WTC11 (cell line): ENCODE measurements at regions of chr9 and their contacts with region 1.

Region 1: DNA sequence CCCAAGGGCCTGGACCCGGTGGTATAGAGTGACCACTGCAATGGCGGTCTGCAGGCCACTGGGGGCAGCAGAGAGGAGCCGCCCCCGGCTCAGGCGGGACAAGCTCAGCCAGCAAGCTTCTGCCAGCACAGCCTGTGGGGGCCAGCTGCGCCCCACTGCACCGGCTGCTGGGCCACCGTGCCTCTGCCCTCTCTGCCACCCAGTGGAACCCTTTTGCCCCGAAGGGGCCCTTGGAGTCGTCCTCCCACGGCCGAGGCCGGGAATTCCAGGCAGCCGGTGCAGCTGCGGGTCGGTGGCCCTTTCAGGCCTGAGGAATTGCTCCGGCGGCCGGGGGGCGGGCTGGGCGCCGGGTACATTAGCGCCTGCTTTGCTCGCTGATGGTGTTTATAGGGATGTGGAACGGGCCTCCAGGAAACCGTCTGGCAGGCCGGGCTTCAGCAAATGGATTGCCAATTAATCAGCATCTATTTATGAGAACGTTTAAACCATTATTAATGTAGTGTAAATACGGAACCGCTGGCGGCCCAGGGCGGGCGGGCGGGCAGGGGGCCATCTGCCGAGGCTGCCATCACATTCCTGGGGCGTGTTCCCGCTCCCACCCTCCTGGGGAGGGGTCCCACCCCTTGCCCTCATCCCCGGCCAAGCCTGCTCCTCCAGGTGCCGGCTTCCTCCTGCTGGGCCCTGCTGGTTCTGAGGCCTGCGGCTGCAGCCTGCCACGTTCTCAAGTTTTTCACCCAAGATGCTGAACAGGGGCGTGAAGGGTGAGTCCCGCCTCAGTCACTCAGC is 127.4 kb downstream of the BARX1 start:
- DNase-seq: peak; percentile 81
- ATAC-seq: peak; percentile 91
- H3K4me3 Mint-ChIP-seq: peak overlapping the region; percentile 30
- H3K27ac Mint-ChIP-seq: no peak overlapping the region
- H3K4me1 Mint-ChIP-seq: peaks cover 13% of the 10 kb centered on the region
- H3K27me3 Mint-ChIP-seq: peaks cover 7% of the 10 kb centered on the region
- CTCF ChIP-seq: peak; percentile 87

Region 2: GRCh38 chr9:93668261-93668871 is 159.4 kb before region 1 on chr9:
- CTCF ChIA-PET with region 1: interaction called, 10 read pairs
- POLR2A ChIA-PET with region 1: no interaction called
- DNase-seq: peak; percentile 14
- ATAC-seq: peak; percentile 30
- H3K4me3 Mint-ChIP-seq: no peak overlapping the region
- H3K27ac Mint-ChIP-seq: peak overlapping the region; percentile 63; the same call in 1 of the 2 replicates
- H3K4me1 Mint-ChIP-seq: no peaks in the 10 kb centered on the region
- H3K27me3 Mint-ChIP-seq: no peaks in the 10 kb centered on the region
- CTCF ChIP-seq: no peak

Region 3: GRCh38 chr9:93759307-93759706 is 68.4 kb before region 1 on chr9:
- CTCF ChIA-PET with region 1: no interaction called
- POLR2A ChIA-PET with region 1: no interaction called
- DNase-seq: no peak
- ATAC-seq: no peak
- H3K4me3 Mint-ChIP-seq: no peak overlapping the region
- H3K27ac Mint-ChIP-seq: no peak overlapping the region
- H3K4me1 Mint-ChIP-seq: peaks cover 24% of the 10 kb centered on the region
- H3K27me3 Mint-ChIP-seq: peaks cover 11% of the 10 kb centered on the region
- CTCF ChIP-seq: no peak

Region 4: DNA sequence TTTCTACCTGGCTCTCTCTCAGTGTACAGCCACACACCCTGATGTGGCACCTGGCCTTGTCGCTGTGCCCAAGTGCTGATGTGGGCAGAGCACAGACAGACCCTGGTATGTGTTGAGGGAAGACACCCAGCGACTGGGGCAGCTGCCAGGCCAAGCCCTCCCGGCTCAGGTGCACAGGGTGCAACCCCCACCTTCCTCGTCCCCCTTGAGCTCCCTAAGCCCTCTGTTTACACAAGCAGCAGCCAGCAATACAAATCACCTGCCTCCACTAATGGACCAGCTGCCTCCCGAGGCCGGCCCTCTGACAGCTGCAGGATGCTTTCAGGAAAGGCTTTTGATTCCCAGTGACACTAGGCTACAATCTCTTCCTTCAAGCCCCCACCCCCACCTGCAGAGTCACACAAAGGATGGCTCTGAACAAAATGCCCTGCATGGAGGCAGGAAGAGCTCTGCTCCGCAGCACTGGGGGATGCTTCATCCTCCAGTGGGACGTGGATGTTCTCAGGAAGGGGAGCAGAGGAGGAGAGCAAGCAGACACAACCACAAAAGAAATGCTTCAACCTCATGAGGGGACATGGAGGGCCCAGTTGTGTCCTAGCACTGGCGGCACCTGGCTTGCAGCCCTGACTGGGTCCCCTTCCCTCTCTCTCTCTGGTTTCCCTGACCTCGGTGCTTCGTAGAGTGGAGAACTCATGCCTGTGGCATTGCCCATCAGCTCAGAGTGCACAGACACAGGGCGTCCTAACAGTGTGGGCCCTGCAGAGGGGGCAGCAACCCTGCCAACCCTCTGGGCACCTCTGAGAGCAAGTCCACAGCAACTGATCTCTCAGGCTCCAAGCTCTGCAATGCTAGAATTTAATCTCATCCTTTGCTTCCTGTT is 13.4 kb before region 1 on chr9:
- CTCF ChIA-PET with region 1: interaction called, 68 read pairs
- POLR2A ChIA-PET with region 1: no interaction called
- DNase-seq: no peak
- ATAC-seq: peak; percentile 59
- H3K4me3 Mint-ChIP-seq: no peak overlapping the region
- H3K27ac Mint-ChIP-seq: no peak overlapping the region
- H3K4me1 Mint-ChIP-seq: peaks cover 37% of the 10 kb centered on the region
- H3K27me3 Mint-ChIP-seq: no peaks in the 10 kb centered on the region
- CTCF ChIP-seq: no peak

Region 5: GRCh38 chr9:93860694-93861658 is 33.2 kb after region 1 on chr9:
- CTCF ChIA-PET with region 1: interaction called, 52 read pairs
- POLR2A ChIA-PET with region 1: no interaction called
- DNase-seq: peak; percentile 40
- ATAC-seq: peak; percentile 12; the same call in 1 of the 2 replicates
- H3K4me3 Mint-ChIP-seq: peak overlapping the region; percentile 34; the same call in 1 of the 2 replicates
- H3K27ac Mint-ChIP-seq: no peak overlapping the region
- H3K4me1 Mint-ChIP-seq: peaks cover 27% of the 10 kb centered on the region
- H3K27me3 Mint-ChIP-seq: no peaks in the 10 kb centered on the region; the same call in 1 of the 2 replicates
- CTCF ChIP-seq: no peak

Region 6: GRCh38 chr9:93930070-93930469 is 102.3 kb after region 1 on chr9:
- CTCF ChIA-PET with region 1: interaction called, 10 read pairs
- POLR2A ChIA-PET with region 1: no interaction called
- DNase-seq: no peak
- ATAC-seq: peak; percentile 74
- H3K4me3 Mint-ChIP-seq: no peak overlapping the region
- H3K27ac Mint-ChIP-seq: no peak overlapping the region
- H3K4me1 Mint-ChIP-seq: 0 out of 2 replicates have a peak, but pooled peaks cover 4% of the 10 kb centered on the region
- H3K27me3 Mint-ChIP-seq: peaks cover 8% of the 10 kb centered on the region; the same call in 1 of the 2 replicates
- CTCF ChIP-seq: no peak

Region 7: GRCh38 chr9:93950619-93951601 is 123.2 kb after region 1 on chr9:
- CTCF ChIA-PET with region 1: interaction called, 157 read pairs
- POLR2A ChIA-PET with region 1: no interaction called
- DNase-seq: peak; percentile 62
- ATAC-seq: peak; percentile 2; the same call in 1 of the 2 replicates
- H3K4me3 Mint-ChIP-seq: peak overlapping the region; percentile 69
- H3K27ac Mint-ChIP-seq: no peak overlapping the region
- H3K4me1 Mint-ChIP-seq: peaks cover 67% of the 10 kb centered on the region
- H3K27me3 Mint-ChIP-seq: peaks cover 93% of the 10 kb centered on the region
- CTCF ChIP-seq: no peak

Region 8: GRCh38 chr9:94213511-94214124 is 385.9 kb after region 1 on chr9:
- CTCF ChIA-PET with region 1: interaction called, 10 read pairs
- POLR2A ChIA-PET with region 1: no interaction called
- DNase-seq: peak; percentile 81
- ATAC-seq: peak; percentile 88
- H3K4me3 Mint-ChIP-seq: no peak overlapping the region
- H3K27ac Mint-ChIP-seq: no peak overlapping the region
- H3K4me1 Mint-ChIP-seq: peaks cover 20% of the 10 kb centered on the region
- H3K27me3 Mint-ChIP-seq: peaks cover 11% of the 10 kb centered on the region
- CTCF ChIP-seq: peak; percentile 61